Mammary epithelial cell (primary cell): ENCODE measurements at regions of chr5 and their contacts with region 1.

Region 1: GRCh38 chr5:153964880-153965645 is 73.6 kb downstream of the FAM114A2 start:
- DNase-seq: peak; percentile 40
- H3K4me3 ChIP-seq: no peak overlapping the region
- H3K27ac ChIP-seq: no peak overlapping the region
- H3K4me1 ChIP-seq: peaks cover 7% of the 10 kb centered on the region
- H3K27me3 ChIP-seq: no peaks in the 10 kb centered on the region
- CTCF ChIP-seq: peak; percentile 87 to 95

Region 2: GRCh38 chr5:152523964-152524363 is 1441.1 kb before region 1 on chr5:
- CTCF ChIA-PET with region 1: no interaction called
- dilution Hi-C with region 1: no loop called
- in situ Hi-C with region 1: loop called in 1 of 2 experiments (anchors 5 kb)
- intact Hi-C with region 1: no loop called
- DNase-seq: peak; percentile 41
- H3K4me3 ChIP-seq: no peak overlapping the region
- H3K27ac ChIP-seq: no peak overlapping the region
- H3K4me1 ChIP-seq: peaks cover 7% of the 10 kb centered on the region
- H3K27me3 ChIP-seq: no peaks in the 10 kb centered on the region
- CTCF ChIP-seq: no peak

Region 3: GRCh38 chr5:152560512-152561137 is 1404.4 kb before region 1 on chr5:
- CTCF ChIA-PET with region 1: interaction called, 3 read pairs
- dilution Hi-C with region 1: no loop called
- in situ Hi-C with region 1: no loop called
- intact Hi-C with region 1: loop called (anchors 10 kb)
- DNase-seq: peak; percentile 37
- H3K4me3 ChIP-seq: no peak overlapping the region
- H3K27ac ChIP-seq: no peak overlapping the region
- H3K4me1 ChIP-seq: no peaks in the 10 kb centered on the region
- H3K27me3 ChIP-seq: no peaks in the 10 kb centered on the region
- CTCF ChIP-seq: peak; percentile 91 to 94

Region 4: DNA sequence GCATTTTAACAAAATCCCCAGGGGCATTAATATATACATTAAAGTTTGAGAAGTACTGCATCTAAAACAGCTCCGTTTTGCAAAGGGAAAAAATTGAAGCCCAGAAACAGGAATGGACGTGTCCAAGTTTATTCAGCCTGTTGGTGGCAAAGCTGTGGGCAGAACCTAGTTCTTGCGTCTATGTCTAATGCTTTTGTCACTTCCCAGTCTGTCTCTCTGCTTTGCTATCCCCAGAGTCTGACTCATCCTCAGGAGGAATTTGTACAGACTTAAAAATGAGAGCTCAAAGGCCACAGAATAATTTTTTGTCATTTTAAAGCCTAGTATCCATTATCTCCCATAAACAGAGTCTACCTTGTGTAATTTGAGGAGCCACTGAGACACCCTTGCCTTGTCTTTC is 805.5 kb before region 1 on chr5:
- CTCF ChIA-PET with region 1: no interaction called
- dilution Hi-C with region 1: no loop called
- in situ Hi-C with region 1: no loop called
- intact Hi-C with region 1: loop called (anchors 2 kb)
- DNase-seq: peak; percentile 87
- H3K4me3 ChIP-seq: no peak overlapping the region
- H3K27ac ChIP-seq: peak overlapping the region; percentile 77
- H3K4me1 ChIP-seq: peaks cover 35% of the 10 kb centered on the region
- H3K27me3 ChIP-seq: no peaks in the 10 kb centered on the region
- CTCF ChIP-seq: no peak

Region 5: GRCh38 chr5:153496835-153497234 is 468.2 kb before region 1 on chr5:
- CTCF ChIA-PET with region 1: no interaction called
- dilution Hi-C with region 1: no loop called
- in situ Hi-C with region 1: loop called (anchors 10 to 25 kb)
- intact Hi-C with region 1: loop called (anchors 1 kb)
- DNase-seq: peak; percentile 22
- H3K4me3 ChIP-seq: no peak overlapping the region
- H3K27ac ChIP-seq: no peak overlapping the region
- H3K4me1 ChIP-seq: no peaks in the 10 kb centered on the region
- H3K27me3 ChIP-seq: no peaks in the 10 kb centered on the region
- CTCF ChIP-seq: peak; percentile 79 to 93

Region 6: GRCh38 chr5:153523831-153524230 is 441.2 kb before region 1 on chr5:
- CTCF ChIA-PET with region 1: no interaction called
- dilution Hi-C with region 1: no loop called
- in situ Hi-C with region 1: loop called in 1 of 2 experiments (anchors 25 kb)
- intact Hi-C with region 1: no loop called
- DNase-seq: no peak
- H3K4me3 ChIP-seq: no peak overlapping the region
- H3K27ac ChIP-seq: no peak overlapping the region
- H3K4me1 ChIP-seq: peaks cover 4% of the 10 kb centered on the region
- H3K27me3 ChIP-seq: no peaks in the 10 kb centered on the region
- CTCF ChIP-seq: no peak

Region 7: GRCh38 chr5:153827397-153827796 is 137.7 kb before region 1 on chr5:
- CTCF ChIA-PET with region 1: no interaction called
- dilution Hi-C with region 1: no loop called
- in situ Hi-C with region 1: no loop called
- intact Hi-C with region 1: loop called (anchors 1 kb)
- DNase-seq: no peak
- H3K4me3 ChIP-seq: no peak overlapping the region
- H3K27ac ChIP-seq: no peak overlapping the region
- H3K4me1 ChIP-seq: no peaks in the 10 kb centered on the region
- H3K27me3 ChIP-seq: no peaks in the 10 kb centered on the region
- CTCF ChIP-seq: peak in 1 of 2 donors; percentile 29